ENCODE measurements at regions of chr1 and their contacts with region 1.

Region 1: GRCh38 chr1:214029796-214030195 is 42.0 kb downstream of the PROX1 start:
- DNase-seq: no peak
- H3K4me3 ChIP-seq: peak overlapping the region in 21 of 59 donors; percentile 1 to 48 (median 24)
- H3K27ac ChIP-seq: peak overlapping the region in 53 of 59 donors; percentile 5 to 85 (median 63)
- H3K27me3 ChIP-seq: peaks cover 0 to 8% (median 0%) of the 10 kb centered on the region in 45 donors
- CTCF ChIP-seq: no peak

Region 2: GRCh38 chr1:213996320-213997037 is 33.3 kb before region 1 on chr1:
- intact Hi-C with region 1: loop called in 1 of 2 experiments (anchors 5 kb)
- DNase-seq: peak in 4 of 10 donors; percentile 65 to 76 (median 72)
- H3K4me3 ChIP-seq: peak overlapping the region in 45 of 59 donors; percentile 5 to 53 (median 26)
- H3K27ac ChIP-seq: peak overlapping the region; percentile 11 to 96 (median 89)
- H3K27me3 ChIP-seq: peaks cover 0 to 32% (median 0%) of the 10 kb centered on the region in 45 donors
- CTCF ChIP-seq: no peak

Measured in dorsolateral prefrontal cortex (tissue), 120 donors.